ENCODE measurements at regions of chr2 and their contacts with region 1.

Region 1: GRCh38 chr2:101823347-101823791 is 125.9 kb downstream of the MAP4K4 start:
- DNase-seq: peak; percentile 78
- ATAC-seq: peak; percentile 91
- H3K4me3 ChIP-seq: no peak overlapping the region
- H3K4me3 Mint-ChIP-seq: peak overlapping the region; percentile 40
- H3K27ac ChIP-seq: peak overlapping the region in 1 of 2 donors; percentile 64
- H3K27ac Mint-ChIP-seq: peak overlapping the region; percentile 32
- H3K4me1 ChIP-seq: peaks cover 23 to 46% of the 10 kb centered on the region in 2 donors
- H3K4me1 Mint-ChIP-seq: peaks cover 69% of the 10 kb centered on the region
- H3K27me3 ChIP-seq: no peaks in the 10 kb centered on the region
- H3K27me3 Mint-ChIP-seq: no peaks in the 10 kb centered on the region
- CTCF ChIP-seq: peak; percentile 88

Region 2: GRCh38 chr2:101341901-101342624 is 481.3 kb before region 1 on chr2:
- CTCF ChIA-PET with region 1: interaction called, 58 read pairs
- POLR2A ChIA-PET with region 1: no interaction called
- intact Hi-C with region 1: no loop called
- DNase-seq: peak; percentile 73
- ATAC-seq: peak; percentile 56
- H3K4me3 ChIP-seq: no peak overlapping the region
- H3K4me3 Mint-ChIP-seq: no peak overlapping the region
- H3K27ac ChIP-seq: no peak overlapping the region
- H3K27ac Mint-ChIP-seq: no peak overlapping the region
- H3K4me1 ChIP-seq: peaks cover 0 to 8% of the 10 kb centered on the region in 2 donors
- H3K4me1 Mint-ChIP-seq: peaks cover 7% of the 10 kb centered on the region
- H3K27me3 ChIP-seq: no peaks in the 10 kb centered on the region
- H3K27me3 Mint-ChIP-seq: peaks cover 2% of the 10 kb centered on the region
- CTCF ChIP-seq: peak; percentile 90

Region 3: DNA sequence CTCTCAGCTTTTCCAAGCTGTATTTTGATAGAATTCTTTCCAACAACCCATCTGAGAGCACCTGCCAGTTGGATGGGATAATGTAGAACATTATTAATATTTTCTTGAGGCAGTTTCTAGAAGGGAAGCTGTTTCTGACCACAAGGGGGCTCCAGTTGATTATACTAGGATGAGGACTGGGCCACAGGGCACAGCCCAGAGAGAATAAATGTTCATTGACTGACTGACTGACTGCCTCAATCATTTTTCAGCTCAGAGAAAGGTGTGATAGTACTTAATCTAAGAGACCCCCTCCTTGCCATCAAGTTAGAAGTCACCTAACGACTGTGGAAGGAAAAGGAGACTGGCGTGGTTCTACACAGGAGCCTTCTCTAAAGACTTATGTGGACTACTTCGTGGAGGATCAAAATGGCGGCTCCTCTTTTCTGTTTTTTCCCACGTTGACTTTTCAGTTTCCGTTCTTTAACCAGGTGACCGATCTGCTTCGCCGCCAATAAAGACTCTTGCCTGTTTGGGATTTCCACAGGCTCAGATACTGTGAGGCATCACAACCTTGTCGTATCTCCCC is 404.2 kb before region 1 on chr2:
- CTCF ChIA-PET with region 1: interaction called, 288 read pairs
- POLR2A ChIA-PET with region 1: no interaction called
- intact Hi-C with region 1: loop called (anchors 2 kb)
- DNase-seq: peak; percentile 78
- ATAC-seq: peak; percentile 82
- H3K4me3 ChIP-seq: no peak overlapping the region
- H3K4me3 Mint-ChIP-seq: no peak overlapping the region
- H3K27ac ChIP-seq: no peak overlapping the region
- H3K27ac Mint-ChIP-seq: no peak overlapping the region
- H3K4me1 ChIP-seq: no peaks in the 10 kb centered on the region
- H3K4me1 Mint-ChIP-seq: no peaks in the 10 kb centered on the region
- H3K27me3 ChIP-seq: peaks cover 0 to 5% (median 0%) of the 10 kb centered on the region in 4 experiments
- H3K27me3 Mint-ChIP-seq: peaks cover 8% of the 10 kb centered on the region
- CTCF ChIP-seq: peak; percentile 88

Region 4: DNA sequence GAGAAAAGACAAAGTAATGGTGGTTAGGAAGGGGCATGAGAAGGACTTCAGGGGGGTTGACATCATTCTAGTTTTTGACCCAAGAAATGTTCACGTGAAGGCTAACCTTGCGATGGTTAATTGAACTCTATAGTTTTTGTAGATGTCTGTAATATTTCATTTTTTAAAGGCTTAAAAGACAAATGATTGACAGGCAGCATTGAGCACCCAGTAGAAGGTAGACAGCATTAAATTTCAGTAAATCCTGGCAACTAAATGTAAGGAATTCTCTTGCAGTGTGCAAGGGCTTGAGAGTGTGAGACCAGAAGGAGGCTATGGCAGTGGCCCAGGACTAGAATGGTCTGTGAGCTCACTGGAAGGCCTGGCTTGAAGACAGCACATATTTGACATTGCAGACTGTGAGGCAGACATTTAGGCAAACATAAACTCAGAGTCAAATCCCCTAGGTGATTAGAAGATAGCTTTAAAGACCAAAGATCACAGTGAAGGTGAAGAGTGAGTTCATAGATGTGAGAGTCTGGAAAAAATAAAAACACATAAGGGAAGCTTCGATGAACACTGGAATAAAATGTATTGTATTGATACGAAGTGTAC is 225.9 kb before region 1 on chr2:
- CTCF ChIA-PET with region 1: interaction called, 3 read pairs
- POLR2A ChIA-PET with region 1: no interaction called
- intact Hi-C with region 1: loop called (anchors 5 kb)
- DNase-seq: no peak
- ATAC-seq: no peak
- H3K4me3 ChIP-seq: no peak overlapping the region
- H3K4me3 Mint-ChIP-seq: no peak overlapping the region
- H3K27ac ChIP-seq: no peak overlapping the region
- H3K27ac Mint-ChIP-seq: no peak overlapping the region
- H3K4me1 ChIP-seq: no peaks in the 10 kb centered on the region
- H3K4me1 Mint-ChIP-seq: no peaks in the 10 kb centered on the region
- H3K27me3 ChIP-seq: no peaks in the 10 kb centered on the region
- H3K27me3 Mint-ChIP-seq: no peaks in the 10 kb centered on the region
- CTCF ChIP-seq: no peak

Region 5: GRCh38 chr2:101770726-101771125 is 52.6 kb before region 1 on chr2:
- CTCF ChIA-PET with region 1: interaction called, 38 read pairs
- POLR2A ChIA-PET with region 1: no interaction called
- intact Hi-C with region 1: no loop called
- DNase-seq: peak; percentile 59
- ATAC-seq: no peak
- H3K4me3 ChIP-seq: no peak overlapping the region
- H3K4me3 Mint-ChIP-seq: peak overlapping the region; percentile 30
- H3K27ac ChIP-seq: no peak overlapping the region
- H3K27ac Mint-ChIP-seq: peak overlapping the region; percentile 73
- H3K4me1 ChIP-seq: peaks cover 70 to 82% of the 10 kb centered on the region in 2 donors
- H3K4me1 Mint-ChIP-seq: peaks cover 91% of the 10 kb centered on the region
- H3K27me3 ChIP-seq: no peaks in the 10 kb centered on the region
- H3K27me3 Mint-ChIP-seq: no peaks in the 10 kb centered on the region
- CTCF ChIP-seq: peak; percentile 60